ENCODE measurements at regions of chr13 and their contacts with region 1.

Region 1: GRCh38 chr13:73351730-73352129 is 292.9 kb downstream of the KLF5 start:
- DNase-seq: no peak
- H3K4me3 ChIP-seq: no peak overlapping the region
- H3K27ac ChIP-seq: no peak overlapping the region
- H3K4me1 ChIP-seq: no peaks in the 10 kb centered on the region
- H3K27me3 ChIP-seq: no peaks in the 10 kb centered on the region
- CTCF ChIP-seq: no peak
- EP300 ChIP-seq: no peak
- POLR2A ChIP-seq: no peak

Region 2: DNA sequence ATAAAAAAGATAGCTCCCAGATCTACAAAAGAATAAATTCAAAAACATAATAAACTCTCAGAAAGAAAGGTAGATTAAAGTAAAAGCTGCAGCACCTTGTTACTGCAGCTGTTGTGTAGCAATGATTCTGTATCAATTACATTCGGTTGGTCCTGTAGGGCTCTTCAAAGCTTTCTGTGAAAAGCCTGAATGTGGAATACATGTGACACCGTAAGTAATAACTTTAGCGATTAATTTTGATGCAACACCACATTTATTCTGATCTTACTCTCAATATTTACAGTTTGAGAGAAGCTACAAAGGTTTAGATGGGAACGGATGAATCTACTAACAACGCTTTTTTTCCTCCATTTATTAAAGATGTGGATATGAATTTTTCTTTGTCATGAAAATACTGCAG is 1763.9 kb before region 1 on chr13:
- intact Hi-C with region 1: loop called in 1 of 4 experiments (anchors 5 kb)
- DNase-seq: no peak
- H3K4me3 ChIP-seq: no peak overlapping the region
- H3K27ac ChIP-seq: no peak overlapping the region
- H3K4me1 ChIP-seq: no peaks in the 10 kb centered on the region
- H3K27me3 ChIP-seq: no peaks in the 10 kb centered on the region
- CTCF ChIP-seq: no peak
- EP300 ChIP-seq: no peak
- POLR2A ChIP-seq: no peak